CD4-positive, alpha-beta T cell (primary cell): ENCODE measurements at regions of chr17 and their contacts with region 1.

Region 1: GRCh38 chr17:30336369-30337171 is 2.7 kb upstream of the TMIGD1 start:
- DNase-seq: peak; percentile 14 to 83 (median 48)
- ATAC-seq: peak; percentile 43
- H3K4me3 ChIP-seq: no peak overlapping the region
- H3K4me3 Mint-ChIP-seq: peak overlapping the region; percentile 9
- H3K27ac ChIP-seq: no peak overlapping the region
- H3K27ac Mint-ChIP-seq: peak overlapping the region; percentile 38
- H3K4me1 ChIP-seq: peaks cover 18% of the 10 kb centered on the region
- H3K4me1 Mint-ChIP-seq: peaks cover 34% of the 10 kb centered on the region
- H3K27me3 ChIP-seq: no peaks in the 10 kb centered on the region
- H3K27me3 Mint-ChIP-seq: no peaks in the 10 kb centered on the region
- CTCF ChIP-seq: peak; percentile 97

Region 2: GRCh38 chr17:30124273-30124796 is 212.2 kb before region 1 on chr17:
- CTCF ChIA-PET with region 1: interaction called, 24 read pairs
- POLR2A ChIA-PET with region 1: interaction called, 4 read pairs
- intact Hi-C with region 1: loop called (anchors 1 kb)
- DNase-seq: no peak
- ATAC-seq: no peak
- H3K4me3 ChIP-seq: no peak overlapping the region
- H3K4me3 Mint-ChIP-seq: no peak overlapping the region
- H3K27ac ChIP-seq: no peak overlapping the region
- H3K27ac Mint-ChIP-seq: peak overlapping the region; percentile 27
- H3K4me1 ChIP-seq: peaks cover 10% of the 10 kb centered on the region
- H3K4me1 Mint-ChIP-seq: peaks cover 42% of the 10 kb centered on the region
- H3K27me3 ChIP-seq: no peaks in the 10 kb centered on the region
- H3K27me3 Mint-ChIP-seq: no peaks in the 10 kb centered on the region
- CTCF ChIP-seq: no peak

Region 3: GRCh38 chr17:30151471-30151870 is 185.1 kb before region 1 on chr17:
- CTCF ChIA-PET with region 1: no interaction called
- POLR2A ChIA-PET with region 1: no interaction called
- intact Hi-C with region 1: no loop called
- DNase-seq: no peak
- ATAC-seq: no peak
- H3K4me3 ChIP-seq: no peak overlapping the region
- H3K4me3 Mint-ChIP-seq: no peak overlapping the region
- H3K27ac ChIP-seq: no peak overlapping the region
- H3K27ac Mint-ChIP-seq: peak overlapping the region; percentile 27
- H3K4me1 ChIP-seq: no peaks in the 10 kb centered on the region
- H3K4me1 Mint-ChIP-seq: peaks cover 26% of the 10 kb centered on the region
- H3K27me3 ChIP-seq: no peaks in the 10 kb centered on the region
- H3K27me3 Mint-ChIP-seq: no peaks in the 10 kb centered on the region
- CTCF ChIP-seq: no peak

Region 4: GRCh38 chr17:30236766-30237165 is 99.8 kb before region 1 on chr17:
- CTCF ChIA-PET with region 1: no interaction called
- POLR2A ChIA-PET with region 1: no interaction called
- intact Hi-C with region 1: no loop called
- DNase-seq: peak in 2 of 14 experiments; percentile 17 to 32
- ATAC-seq: no peak
- H3K4me3 ChIP-seq: no peak overlapping the region
- H3K4me3 Mint-ChIP-seq: no peak overlapping the region
- H3K27ac ChIP-seq: no peak overlapping the region
- H3K27ac Mint-ChIP-seq: no peak overlapping the region
- H3K4me1 ChIP-seq: peaks cover 33% of the 10 kb centered on the region
- H3K4me1 Mint-ChIP-seq: peaks cover 22% of the 10 kb centered on the region
- H3K27me3 ChIP-seq: peaks cover 46 to 58% of the 10 kb centered on the region in 2 experiments
- H3K27me3 Mint-ChIP-seq: peaks cover 80% of the 10 kb centered on the region
- CTCF ChIP-seq: no peak

Region 5: DNA sequence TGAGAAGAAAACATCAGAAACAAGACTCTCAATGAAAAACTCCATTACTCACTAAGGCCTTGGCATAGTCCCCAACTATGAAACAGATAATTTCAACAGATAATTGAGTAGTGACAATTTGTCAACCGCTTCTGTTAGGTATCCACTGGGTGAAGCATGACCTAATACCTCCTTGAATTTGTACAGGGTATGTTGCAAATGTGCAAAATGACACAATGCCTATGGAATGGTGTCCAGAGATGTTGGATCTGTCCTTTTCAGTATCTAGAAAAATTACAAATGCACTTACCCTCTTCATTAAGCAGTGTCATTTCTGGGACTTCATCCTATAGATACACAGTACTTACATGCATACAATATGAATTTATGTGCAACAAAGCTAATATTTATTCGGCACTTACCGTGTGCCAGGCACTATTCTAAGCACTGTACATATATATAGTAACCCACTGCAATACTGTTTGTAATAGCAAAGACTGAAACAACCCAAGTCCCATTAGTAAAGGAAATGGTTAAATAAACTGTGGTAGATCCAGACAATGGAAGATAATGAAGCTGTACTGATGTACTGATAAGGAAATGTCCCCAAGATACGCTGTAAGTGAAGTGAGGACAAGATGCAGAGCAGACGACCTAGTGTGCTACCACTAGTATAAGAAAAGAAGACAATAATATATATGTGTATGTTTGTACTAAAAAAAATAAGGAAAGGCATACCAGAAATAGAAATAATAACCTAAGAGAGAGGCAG is 79.6 kb before region 1 on chr17:
- CTCF ChIA-PET with region 1: no interaction called
- POLR2A ChIA-PET with region 1: no interaction called
- intact Hi-C with region 1: no loop called
- DNase-seq: no peak
- ATAC-seq: no peak
- H3K4me3 ChIP-seq: no peak overlapping the region
- H3K4me3 Mint-ChIP-seq: no peak overlapping the region
- H3K27ac ChIP-seq: no peak overlapping the region
- H3K27ac Mint-ChIP-seq: no peak overlapping the region
- H3K4me1 ChIP-seq: no peaks in the 10 kb centered on the region
- H3K4me1 Mint-ChIP-seq: no peaks in the 10 kb centered on the region
- H3K27me3 ChIP-seq: no peaks in the 10 kb centered on the region
- H3K27me3 Mint-ChIP-seq: no peaks in the 10 kb centered on the region
- CTCF ChIP-seq: no peak

Region 6: GRCh38 chr17:30291543-30292285 is 44.9 kb before region 1 on chr17 and contains the start of gene BLMH:
- CTCF ChIA-PET with region 1: interaction called, 28 read pairs
- POLR2A ChIA-PET with region 1: interaction called, 10 read pairs
- intact Hi-C with region 1: loop called in 1 of 2 experiments (anchors 1 kb)
- DNase-seq: peak; percentile 61 to 88 (median 80)
- ATAC-seq: peak; percentile 85
- H3K4me3 ChIP-seq: peak within 1 kb of the TSS; percentile 91
- H3K4me3 Mint-ChIP-seq: peak within 1 kb of the TSS; percentile 98
- H3K27ac ChIP-seq: no peak within 1 kb of the TSS
- H3K27ac Mint-ChIP-seq: peak within 1 kb of the TSS; percentile 84
- H3K4me1 ChIP-seq: peaks cover 8% of the 10 kb centered on the region
- H3K4me1 Mint-ChIP-seq: peaks cover 24% of the 10 kb centered on the region
- H3K27me3 ChIP-seq: no peaks in the 10 kb centered on the region
- H3K27me3 Mint-ChIP-seq: no peaks in the 10 kb centered on the region
- CTCF ChIP-seq: no peak
- total RNA-seq, gene BLMH: 32.9 to 36.5 TPM

Region 7: GRCh38 chr17:30323895-30324319 is 12.7 kb before region 1 on chr17:
- CTCF ChIA-PET with region 1: interaction called, 19 read pairs
- POLR2A ChIA-PET with region 1: interaction called, 45 read pairs
- intact Hi-C with region 1: loop called in 1 of 2 experiments (anchors 1 kb)
- DNase-seq: peak in 13 of 14 experiments; percentile 14 to 69 (median 39)
- ATAC-seq: peak; percentile 59
- H3K4me3 ChIP-seq: no peak overlapping the region
- H3K4me3 Mint-ChIP-seq: peak overlapping the region; percentile 58
- H3K27ac ChIP-seq: peak overlapping the region; percentile 51 to 53
- H3K27ac Mint-ChIP-seq: peak overlapping the region; percentile 88
- H3K4me1 ChIP-seq: peaks cover 36% of the 10 kb centered on the region
- H3K4me1 Mint-ChIP-seq: peaks cover 58% of the 10 kb centered on the region
- H3K27me3 ChIP-seq: no peaks in the 10 kb centered on the region
- H3K27me3 Mint-ChIP-seq: no peaks in the 10 kb centered on the region
- CTCF ChIP-seq: no peak

Region 8: DNA sequence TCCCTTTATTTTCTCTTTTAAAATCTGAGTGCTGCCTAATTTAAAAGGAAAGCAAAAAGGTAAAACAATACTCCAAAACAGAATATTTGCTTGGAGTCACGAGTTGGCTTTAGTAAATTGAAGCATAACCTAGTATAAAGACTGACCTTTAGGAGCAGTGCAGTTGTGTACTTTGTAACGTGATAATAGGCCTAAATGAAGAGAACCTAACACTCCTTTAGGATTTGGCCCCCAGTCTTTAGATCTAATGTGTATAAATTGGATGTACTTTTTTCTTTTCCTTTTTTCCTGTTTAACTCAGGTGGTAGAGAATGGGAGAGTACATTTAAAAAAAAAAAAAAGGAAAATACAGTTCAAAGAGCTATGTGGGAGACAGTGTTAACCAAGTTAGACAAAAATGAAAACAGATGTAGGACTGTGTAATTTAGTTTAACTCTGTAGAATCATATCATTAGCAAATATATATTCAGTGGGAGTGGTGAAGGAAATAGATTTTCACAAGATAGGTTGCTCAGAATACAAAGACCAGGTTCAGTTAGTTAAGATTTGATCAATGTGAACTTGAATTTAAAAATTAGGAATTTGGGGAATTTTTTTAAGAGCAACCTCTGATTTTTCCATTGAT is 58.9 kb after region 1 on chr17:
- CTCF ChIA-PET with region 1: no interaction called
- POLR2A ChIA-PET with region 1: no interaction called
- intact Hi-C with region 1: no loop called
- DNase-seq: no peak
- ATAC-seq: no peak
- H3K4me3 ChIP-seq: no peak overlapping the region
- H3K4me3 Mint-ChIP-seq: no peak overlapping the region
- H3K27ac ChIP-seq: no peak overlapping the region
- H3K27ac Mint-ChIP-seq: no peak overlapping the region
- H3K4me1 ChIP-seq: no peaks in the 10 kb centered on the region
- H3K4me1 Mint-ChIP-seq: peaks cover 32% of the 10 kb centered on the region
- H3K27me3 ChIP-seq: no peaks in the 10 kb centered on the region
- H3K27me3 Mint-ChIP-seq: no peaks in the 10 kb centered on the region
- CTCF ChIP-seq: no peak